ENCODE measurements at regions of chr6 and their contacts with region 1.

Region 1: GRCh38 chr6:70884074-70884983 is 72.5 kb downstream of the B3GAT2 start:
- DNase-seq: peak; percentile 30 to 70 (median 56)
- ATAC-seq: peak; percentile 73 to 99 (median 91)
- H3K4me3 ChIP-seq: no peak overlapping the region
- H3K27ac ChIP-seq: no peak overlapping the region
- H3K4me1 ChIP-seq: no peaks in the 10 kb centered on the region
- H3K27me3 ChIP-seq: no peaks in the 10 kb centered on the region
- CTCF ChIP-seq: peak; percentile 83 to 96 (median 93)

Region 2: DNA sequence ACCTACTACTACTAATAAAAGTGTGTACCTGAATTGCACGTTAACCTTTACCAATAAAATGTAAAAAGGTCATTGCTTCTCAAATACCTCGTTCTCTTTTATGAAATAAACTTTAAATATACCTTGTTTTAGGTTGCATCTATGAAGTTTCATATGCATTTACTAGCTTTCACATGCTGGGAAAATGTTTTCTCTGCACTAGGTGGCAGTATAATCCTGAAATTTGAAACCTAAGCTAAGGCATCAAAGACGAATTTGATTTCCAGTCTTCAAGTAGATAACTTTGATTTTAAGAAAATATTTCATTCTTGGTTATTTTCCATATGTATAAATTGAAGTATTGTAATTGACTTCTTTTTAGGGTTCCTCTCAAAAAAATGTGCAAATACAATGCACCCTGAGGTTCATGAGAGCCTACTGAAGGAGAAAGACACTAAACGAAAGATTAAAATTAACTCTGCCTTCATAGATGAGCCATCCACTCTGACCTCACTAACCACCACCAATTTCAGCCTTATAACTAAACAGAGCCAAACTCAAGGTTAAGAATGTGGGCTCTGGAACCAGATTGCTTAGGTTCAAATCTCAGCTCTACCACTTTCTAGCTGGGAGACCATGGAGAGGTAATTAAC is 574.1 kb before region 1 on chr6:
- intact Hi-C with region 1: loop called in 1 of 3 experiments (anchors 10 kb)
- DNase-seq: no peak
- ATAC-seq: peak in 3 of 4 donors; percentile 65 to 73 (median 69)
- H3K4me3 ChIP-seq: no peak overlapping the region
- H3K27ac ChIP-seq: no peak overlapping the region
- H3K4me1 ChIP-seq: no peaks in the 10 kb centered on the region
- H3K27me3 ChIP-seq: no peaks in the 10 kb centered on the region
- CTCF ChIP-seq: peak in 3 of 4 donors; percentile 50 to 61 (median 53)

Region 3: GRCh38 chr6:70706491-70707123 is 177.7 kb before region 1 on chr6:
- intact Hi-C with region 1: loop called in 2 of 3 experiments (anchors 5 to 10 kb)
- DNase-seq: no peak
- ATAC-seq: peak in 3 of 4 donors; percentile 39 to 44 (median 40)
- H3K4me3 ChIP-seq: no peak overlapping the region
- H3K27ac ChIP-seq: no peak overlapping the region
- H3K4me1 ChIP-seq: no peaks in the 10 kb centered on the region
- H3K27me3 ChIP-seq: no peaks in the 10 kb centered on the region
- CTCF ChIP-seq: peak; percentile 35 to 58 (median 41)

Measured in pancreas (tissue), 10 donors.